Activated B cell treated with CpG ODN at 0.5 μM for 24 hours (primary cell): ENCODE measurements at regions of chr2 and their contacts with region 1.

Region 1: DNA sequence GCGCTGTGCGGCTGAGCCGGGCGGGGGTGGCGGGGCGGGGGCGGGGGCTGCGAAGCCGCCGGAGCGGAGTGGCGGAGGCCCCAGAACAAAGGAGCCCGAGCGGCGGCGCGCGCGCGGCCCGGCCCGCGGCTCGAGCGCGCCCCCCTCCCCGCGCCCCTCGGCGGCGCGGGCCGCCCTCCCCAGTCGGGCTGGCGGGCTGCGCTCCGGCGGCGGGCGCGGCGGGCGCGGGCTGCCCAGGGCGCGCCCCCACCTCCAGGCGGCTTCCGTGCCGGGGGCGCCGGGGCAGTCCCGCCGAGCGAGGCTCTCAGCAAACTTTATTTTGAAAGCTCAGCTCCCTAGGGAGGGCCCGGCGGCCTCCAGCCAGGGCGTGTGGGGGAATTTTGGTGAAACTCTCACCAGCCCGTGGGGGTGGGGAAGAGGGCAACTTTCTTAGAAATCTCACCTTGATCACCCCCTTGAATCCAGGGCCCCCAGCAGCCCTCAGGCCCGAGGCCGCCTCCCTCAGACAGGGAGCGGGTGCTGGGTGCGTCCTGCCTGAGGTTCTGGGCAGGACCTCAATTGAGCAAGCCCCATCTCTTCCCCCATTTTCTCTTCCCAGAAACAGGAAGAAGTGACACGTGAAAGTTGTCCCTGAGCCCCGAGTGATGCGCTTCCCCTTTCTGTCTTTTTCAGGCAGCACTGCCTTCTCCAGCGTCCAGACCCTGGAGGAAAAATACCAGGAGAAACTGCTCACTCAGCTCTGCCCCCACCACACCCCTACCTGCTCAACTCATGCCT is 786 bp downstream of the TET3 start:
- DNase-seq: peak; percentile 81
- ATAC-seq: peak; percentile 72
- H3K4me3 Mint-ChIP-seq: peak overlapping the region; percentile 90
- H3K27ac Mint-ChIP-seq: peak overlapping the region; percentile 89
- H3K4me1 Mint-ChIP-seq: peaks cover 82% of the 10 kb centered on the region
- H3K27me3 Mint-ChIP-seq: no peaks in the 10 kb centered on the region
- CTCF ChIP-seq: no peak

Region 2: GRCh38 chr2:73759285-73759764 is 226.2 kb before region 1 on chr2:
- CTCF ChIA-PET with region 1: no interaction called
- POLR2A ChIA-PET with region 1: no interaction called
- intact Hi-C with region 1: no loop called
- DNase-seq: no peak
- ATAC-seq: no peak
- H3K4me3 Mint-ChIP-seq: no peak overlapping the region
- H3K27ac Mint-ChIP-seq: no peak overlapping the region
- H3K4me1 Mint-ChIP-seq: no peaks in the 10 kb centered on the region
- H3K27me3 Mint-ChIP-seq: no peaks in the 10 kb centered on the region
- CTCF ChIP-seq: no peak

Region 3: DNA sequence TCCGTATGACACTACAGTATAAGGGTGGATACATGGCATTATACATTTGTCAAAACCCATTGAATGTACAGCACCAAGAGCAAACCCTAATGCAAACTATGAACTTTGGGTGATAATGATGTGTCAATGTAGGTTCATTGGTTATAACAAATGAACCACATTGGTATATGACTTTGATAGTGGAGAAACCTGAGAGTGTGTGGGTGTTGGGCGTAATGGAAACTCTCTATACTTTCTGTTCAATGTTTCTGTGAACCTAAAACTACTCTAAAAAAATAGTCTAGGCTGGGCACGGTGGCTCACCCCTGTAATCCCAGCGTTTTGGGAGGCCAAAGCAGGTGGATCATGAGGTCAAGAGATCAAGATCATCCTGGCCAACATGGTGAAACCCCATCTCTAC is 99.1 kb before region 1 on chr2:
- CTCF ChIA-PET with region 1: no interaction called
- POLR2A ChIA-PET with region 1: no interaction called
- intact Hi-C with region 1: no loop called
- DNase-seq: no peak
- ATAC-seq: no peak
- H3K4me3 Mint-ChIP-seq: no peak overlapping the region
- H3K27ac Mint-ChIP-seq: no peak overlapping the region
- H3K4me1 Mint-ChIP-seq: no peaks in the 10 kb centered on the region
- H3K27me3 Mint-ChIP-seq: peaks cover 20% of the 10 kb centered on the region
- CTCF ChIP-seq: no peak

Region 4: GRCh38 chr2:73926493-73927338 is 58.8 kb before region 1 on chr2 and contains the start of gene DGUOK:
- CTCF ChIA-PET with region 1: no interaction called
- POLR2A ChIA-PET with region 1: interaction called, 9 read pairs
- intact Hi-C with region 1: loop called (anchors 1 kb)
- DNase-seq: peak; percentile 88
- ATAC-seq: peak; percentile 95
- H3K4me3 Mint-ChIP-seq: peak within 1 kb of the TSS; percentile 92
- H3K27ac Mint-ChIP-seq: peak within 1 kb of the TSS; percentile 93
- H3K4me1 Mint-ChIP-seq: peaks cover 60% of the 10 kb centered on the region
- H3K27me3 Mint-ChIP-seq: no peaks in the 10 kb centered on the region
- CTCF ChIP-seq: no peak
- total RNA-seq, gene DGUOK: 70.1 and 77.4 TPM in 2 replicates

Region 5: DNA sequence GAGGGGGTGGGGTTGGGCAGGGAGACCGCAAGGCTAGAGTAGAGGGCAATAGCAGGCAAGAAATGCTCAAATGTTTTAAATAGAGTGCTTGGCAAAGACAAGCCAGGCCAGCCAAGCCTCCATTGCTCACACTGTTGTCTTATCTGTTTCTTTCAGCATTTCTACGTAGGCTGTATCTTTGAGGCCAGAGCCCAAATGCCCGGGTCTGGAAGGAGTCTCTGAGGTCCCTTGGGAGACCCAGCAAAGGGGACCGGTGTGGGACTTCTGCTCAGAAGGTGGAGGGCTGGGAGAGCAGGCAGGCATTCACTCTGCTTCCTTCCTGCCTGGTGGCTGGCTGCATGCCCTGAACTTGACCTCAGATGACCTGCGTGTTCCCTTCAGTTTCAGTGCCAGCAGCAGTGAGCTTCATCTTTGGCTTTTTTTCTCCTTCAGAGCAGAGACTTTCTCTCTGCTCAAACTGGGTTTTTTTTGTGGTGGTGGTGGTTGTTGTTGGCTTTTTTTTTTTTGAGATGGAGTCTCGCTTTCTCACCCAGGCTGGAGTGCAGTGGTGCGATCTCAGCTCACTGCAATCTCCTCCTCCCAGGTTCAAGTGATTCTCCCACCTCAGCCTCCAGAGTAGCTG is 14.5 kb before region 1 on chr2:
- CTCF ChIA-PET with region 1: interaction called, 3 read pairs
- POLR2A ChIA-PET with region 1: interaction called, 5 read pairs
- intact Hi-C with region 1: loop called (anchors 1 kb)
- DNase-seq: no peak
- ATAC-seq: peak; percentile 78
- H3K4me3 Mint-ChIP-seq: peak overlapping the region; percentile 72
- H3K27ac Mint-ChIP-seq: peak overlapping the region; percentile 54
- H3K4me1 Mint-ChIP-seq: peaks cover 49% of the 10 kb centered on the region
- H3K27me3 Mint-ChIP-seq: no peaks in the 10 kb centered on the region
- CTCF ChIP-seq: no peak

Region 6: DNA sequence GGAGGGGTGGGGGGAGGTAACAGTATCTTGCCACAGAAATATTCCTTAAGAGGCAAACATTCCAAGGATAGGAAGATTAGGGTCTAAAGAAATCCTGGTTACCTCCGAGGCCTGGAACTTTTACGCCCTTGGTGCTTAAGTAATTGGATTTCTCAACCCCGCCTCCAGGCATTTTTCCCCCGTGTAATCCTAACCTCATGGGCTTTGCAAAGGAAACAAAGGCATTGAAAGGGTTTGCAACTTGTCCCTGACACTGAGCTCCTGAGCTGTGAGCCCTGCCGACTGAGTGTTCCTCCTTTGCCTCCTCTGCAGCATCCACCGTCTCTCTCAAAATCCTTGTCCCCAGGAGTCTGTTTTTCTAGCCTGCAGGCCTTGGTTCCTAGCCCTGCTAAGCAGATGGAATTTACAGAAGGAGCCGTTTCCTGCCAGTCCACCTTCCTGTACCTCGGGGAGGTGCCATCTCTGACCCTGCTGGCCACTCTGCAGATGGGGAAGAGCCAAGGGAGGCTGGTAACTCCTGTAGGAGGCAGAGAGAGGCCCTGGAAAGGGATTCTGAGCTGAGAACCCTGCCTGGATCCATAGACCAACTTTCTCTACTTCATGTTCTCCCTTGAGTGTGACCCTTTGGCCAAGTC is 23.4 kb after region 1 on chr2:
- CTCF ChIA-PET with region 1: no interaction called
- POLR2A ChIA-PET with region 1: interaction called, 13 read pairs
- intact Hi-C with region 1: no loop called
- DNase-seq: no peak
- ATAC-seq: no peak
- H3K4me3 Mint-ChIP-seq: no peak overlapping the region
- H3K27ac Mint-ChIP-seq: no peak overlapping the region
- H3K4me1 Mint-ChIP-seq: peaks cover 28% of the 10 kb centered on the region
- H3K27me3 Mint-ChIP-seq: no peaks in the 10 kb centered on the region
- CTCF ChIP-seq: no peak

Region 7: GRCh38 chr2:74119912-74120825 is 134.7 kb after region 1 on chr2:
- CTCF ChIA-PET with region 1: no interaction called
- POLR2A ChIA-PET with region 1: interaction called, 5 read pairs
- intact Hi-C with region 1: loop called (anchors 1 kb)
- DNase-seq: peak; percentile 86
- ATAC-seq: peak; percentile 95
- H3K4me3 Mint-ChIP-seq: peak overlapping the region; percentile 89
- H3K27ac Mint-ChIP-seq: peak overlapping the region; percentile 94
- H3K4me1 Mint-ChIP-seq: peaks cover 6% of the 10 kb centered on the region
- H3K27me3 Mint-ChIP-seq: peaks cover 4% of the 10 kb centered on the region
- CTCF ChIP-seq: no peak

Region 8: DNA sequence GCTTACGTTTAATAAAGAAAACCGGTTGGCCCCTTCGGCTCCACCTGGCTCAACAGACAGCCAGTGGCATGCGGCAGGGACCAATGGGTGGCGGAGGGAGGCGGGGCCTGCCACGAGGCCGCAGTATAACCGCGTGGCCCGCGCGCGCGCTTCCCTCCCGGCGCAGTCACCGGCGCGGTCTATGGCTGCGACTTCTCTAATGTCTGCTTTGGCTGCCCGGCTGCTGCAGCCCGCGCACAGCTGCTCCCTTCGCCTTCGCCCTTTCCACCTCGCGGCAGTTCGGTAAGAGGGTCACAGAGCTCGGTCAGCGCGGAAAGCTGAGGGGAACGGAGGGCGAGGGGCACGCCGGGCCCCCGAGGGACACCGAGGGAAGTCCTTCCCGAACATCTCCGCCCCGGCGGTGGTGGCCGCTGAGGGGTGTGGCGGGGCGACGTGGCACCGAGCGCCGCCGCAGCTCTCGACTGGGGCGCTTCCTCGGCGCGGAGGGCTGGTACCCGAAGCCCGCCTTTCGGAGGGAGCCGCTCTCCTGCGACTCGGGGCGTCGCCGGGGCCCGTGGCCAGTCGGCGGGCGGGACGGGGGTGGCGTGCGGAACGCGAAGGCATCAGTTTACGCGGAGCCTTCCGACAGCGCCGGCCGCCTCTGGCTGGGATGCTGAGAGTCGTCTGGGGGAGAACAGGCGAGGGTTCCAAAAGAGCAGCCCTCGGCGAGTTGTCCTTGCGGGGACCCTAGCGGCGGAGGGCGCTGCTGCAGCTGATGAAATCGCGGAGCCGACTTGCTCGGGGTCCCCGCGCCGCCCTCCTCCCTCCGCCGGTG is 213.2 kb after region 1 on chr2 and contains the start of gene MTHFD2:
- CTCF ChIA-PET with region 1: no interaction called
- POLR2A ChIA-PET with region 1: interaction called, 4 read pairs
- intact Hi-C with region 1: loop called (anchors 5 kb)
- DNase-seq: peak; percentile 87
- ATAC-seq: peak; percentile 87
- H3K4me3 Mint-ChIP-seq: peak within 1 kb of the TSS; percentile 99
- H3K27ac Mint-ChIP-seq: peak within 1 kb of the TSS; percentile 100
- H3K4me1 Mint-ChIP-seq: peaks cover 34% of the 10 kb centered on the region
- H3K27me3 Mint-ChIP-seq: no peaks in the 10 kb centered on the region
- CTCF ChIP-seq: peak; percentile 50
- total RNA-seq, gene MTHFD2: 135 and 150 TPM in 2 replicates